CD8-positive, alpha-beta T cell (primary cell): ENCODE measurements at regions of chr1 and their contacts with region 1.

Region 1: GRCh38 chr1:84988588-84988987 is 8.3 kb downstream of the MCOLN2 start:
- DNase-seq: peak in 2 of 9 experiments; percentile 34 to 60
- ATAC-seq: peak; percentile 42
- H3K4me3 ChIP-seq: no peak overlapping the region
- H3K4me3 Mint-ChIP-seq: no peak overlapping the region
- H3K27ac ChIP-seq: peak overlapping the region in 1 of 2 experiments; percentile 60
- H3K27ac Mint-ChIP-seq: peak overlapping the region; percentile 2
- H3K4me1 ChIP-seq: peaks cover 6% of the 10 kb centered on the region
- H3K4me1 Mint-ChIP-seq: peaks cover 29% of the 10 kb centered on the region
- H3K27me3 ChIP-seq: no peaks in the 10 kb centered on the region
- H3K27me3 Mint-ChIP-seq: no peaks in the 10 kb centered on the region
- CTCF ChIP-seq: no peak

Region 2: GRCh38 chr1:85134576-85135395 is 146.2 kb after region 1 on chr1:
- CTCF ChIA-PET with region 1: no interaction called
- POLR2A ChIA-PET with region 1: interaction called, 12 read pairs
- intact Hi-C with region 1: no loop called
- DNase-seq: no peak
- ATAC-seq: no peak
- H3K4me3 ChIP-seq: no peak overlapping the region
- H3K4me3 Mint-ChIP-seq: no peak overlapping the region
- H3K27ac ChIP-seq: no peak overlapping the region
- H3K27ac Mint-ChIP-seq: no peak overlapping the region
- H3K4me1 ChIP-seq: no peaks in the 10 kb centered on the region
- H3K4me1 Mint-ChIP-seq: no peaks in the 10 kb centered on the region
- H3K27me3 ChIP-seq: no peaks in the 10 kb centered on the region
- H3K27me3 Mint-ChIP-seq: no peaks in the 10 kb centered on the region
- CTCF ChIP-seq: no peak